ENCODE measurements at regions of chr7 and their contacts with region 1.

Region 1: DNA sequence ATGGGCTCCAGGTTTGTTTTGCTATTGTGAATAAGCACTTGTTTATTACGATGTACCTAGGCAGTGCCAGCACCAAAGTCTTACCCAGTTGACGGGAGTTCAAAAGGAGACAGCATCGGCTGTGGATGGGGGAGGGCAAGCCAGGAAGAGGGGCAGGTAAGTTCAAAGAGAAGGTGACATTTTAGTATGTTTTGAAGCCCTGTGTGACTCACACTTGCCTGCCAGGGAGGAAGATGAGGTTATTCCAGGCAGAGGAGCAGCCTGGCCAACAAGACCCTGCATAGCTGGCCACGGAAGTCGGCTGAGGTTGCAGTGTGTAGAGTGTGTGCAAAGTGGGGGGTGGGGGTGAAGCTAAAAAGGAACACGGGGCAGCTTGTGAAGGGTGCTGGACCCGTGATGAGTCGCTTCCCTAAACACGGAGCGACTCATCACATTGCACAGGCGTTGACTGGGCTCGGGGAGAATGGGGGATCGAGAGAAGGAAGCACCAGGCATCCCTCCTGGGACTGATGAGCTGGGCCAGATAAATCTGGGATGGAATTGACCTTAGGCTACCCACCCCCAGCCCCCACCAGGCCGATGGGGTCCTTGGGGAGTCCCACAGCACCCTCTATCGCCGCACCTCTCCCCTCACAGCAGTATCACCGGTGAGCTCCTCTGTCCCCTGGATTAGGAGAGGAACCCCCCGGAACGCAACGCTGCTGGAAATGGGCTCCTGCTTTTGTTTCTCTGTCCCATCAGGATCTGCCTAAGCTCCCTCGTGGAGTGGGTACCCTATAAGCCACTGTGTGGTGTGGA is 97.9 kb upstream of the IKZF1 start:
- DNase-seq: no peak
- ATAC-seq: peak in 3 of 8 donors; percentile 14 to 39 (median 18)
- H3K4me3 ChIP-seq: no peak overlapping the region
- H3K27ac ChIP-seq: peak overlapping the region in 1 of 10 donors; percentile 57
- H3K4me1 ChIP-seq: peaks cover 0 to 50% (median 0%) of the 10 kb centered on the region in 9 donors
- H3K27me3 ChIP-seq: peaks cover 0 to 27% (median 4%) of the 10 kb centered on the region in 7 donors
- CTCF ChIP-seq: no peak

Region 2: DNA sequence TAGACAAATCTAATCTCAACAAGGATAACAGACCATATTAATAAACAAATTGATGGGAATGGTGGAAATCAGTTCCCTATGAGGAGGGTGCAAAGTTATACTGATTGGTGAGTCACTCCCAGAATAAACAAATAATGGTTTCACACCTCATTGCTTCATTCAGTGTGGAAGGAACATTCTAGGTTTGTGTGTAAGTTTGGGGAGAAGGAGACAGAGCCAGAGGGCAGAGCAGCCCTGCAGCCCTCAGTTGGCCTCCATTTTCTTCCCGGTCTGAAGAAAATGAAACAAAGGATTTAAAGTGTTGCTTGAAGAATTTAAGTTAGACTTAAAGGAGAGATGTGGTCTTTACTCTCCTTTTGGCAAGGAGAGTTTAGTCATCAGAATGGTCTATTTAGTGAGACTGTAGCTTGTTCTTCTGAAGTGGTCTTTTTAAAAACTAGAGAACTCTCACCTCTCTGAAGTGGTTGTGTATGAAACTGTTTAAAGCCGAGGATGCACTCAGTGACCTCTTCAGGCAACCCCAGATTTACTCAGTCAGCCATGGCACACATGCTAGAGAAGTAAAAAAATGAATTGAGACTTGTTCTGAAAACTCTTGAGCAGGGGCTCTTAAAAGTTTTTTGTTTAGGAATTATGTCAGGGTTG is 125.0 kb after region 1 on chr7:
- intact Hi-C with region 1: no loop called
- DNase-seq: no peak
- ATAC-seq: no peak
- H3K4me3 ChIP-seq: no peak overlapping the region
- H3K27ac ChIP-seq: peak overlapping the region in 1 of 10 donors; percentile 68
- H3K4me1 ChIP-seq: peaks cover 0 to 72% (median 0%) of the 10 kb centered on the region in 9 donors
- H3K27me3 ChIP-seq: peaks cover 0 to 76% (median 23%) of the 10 kb centered on the region in 7 donors
- CTCF ChIP-seq: no peak

Region 3: DNA sequence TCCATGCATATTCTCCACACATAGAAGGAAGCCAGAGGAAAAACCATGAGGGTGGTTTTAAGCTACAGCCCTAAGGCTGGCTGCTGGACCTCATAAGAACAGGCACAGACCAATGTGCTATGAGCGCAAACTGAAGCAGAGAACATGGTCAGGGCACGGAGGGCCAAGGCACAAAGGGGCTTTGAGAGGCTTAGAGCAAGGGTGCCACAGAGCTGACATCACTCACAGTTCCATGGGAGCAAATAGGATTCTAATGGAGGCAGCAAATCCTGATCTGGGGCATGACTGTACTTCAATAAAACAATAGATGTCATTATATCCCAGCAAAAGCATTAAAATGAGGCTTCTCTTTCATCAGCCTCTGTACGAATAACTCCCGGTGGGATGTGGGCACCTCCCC is 947.5 kb after region 1 on chr7:
- intact Hi-C with region 1: loop called in 1 of 10 experiments (anchors 10 kb)
- DNase-seq: no peak
- ATAC-seq: peak in 1 of 8 donors; percentile 23
- H3K4me3 ChIP-seq: no peak overlapping the region
- H3K27ac ChIP-seq: no peak overlapping the region
- H3K4me1 ChIP-seq: peaks cover 0 to 15% (median 0%) of the 10 kb centered on the region in 9 donors
- H3K27me3 ChIP-seq: peaks cover 0 to 5% (median 0%) of the 10 kb centered on the region in 7 donors
- CTCF ChIP-seq: no peak

Measured in heart right ventricle (tissue), 16 donors.